ENCODE measurements at regions of chr15 and their contacts with region 1.

Region 1: DNA sequence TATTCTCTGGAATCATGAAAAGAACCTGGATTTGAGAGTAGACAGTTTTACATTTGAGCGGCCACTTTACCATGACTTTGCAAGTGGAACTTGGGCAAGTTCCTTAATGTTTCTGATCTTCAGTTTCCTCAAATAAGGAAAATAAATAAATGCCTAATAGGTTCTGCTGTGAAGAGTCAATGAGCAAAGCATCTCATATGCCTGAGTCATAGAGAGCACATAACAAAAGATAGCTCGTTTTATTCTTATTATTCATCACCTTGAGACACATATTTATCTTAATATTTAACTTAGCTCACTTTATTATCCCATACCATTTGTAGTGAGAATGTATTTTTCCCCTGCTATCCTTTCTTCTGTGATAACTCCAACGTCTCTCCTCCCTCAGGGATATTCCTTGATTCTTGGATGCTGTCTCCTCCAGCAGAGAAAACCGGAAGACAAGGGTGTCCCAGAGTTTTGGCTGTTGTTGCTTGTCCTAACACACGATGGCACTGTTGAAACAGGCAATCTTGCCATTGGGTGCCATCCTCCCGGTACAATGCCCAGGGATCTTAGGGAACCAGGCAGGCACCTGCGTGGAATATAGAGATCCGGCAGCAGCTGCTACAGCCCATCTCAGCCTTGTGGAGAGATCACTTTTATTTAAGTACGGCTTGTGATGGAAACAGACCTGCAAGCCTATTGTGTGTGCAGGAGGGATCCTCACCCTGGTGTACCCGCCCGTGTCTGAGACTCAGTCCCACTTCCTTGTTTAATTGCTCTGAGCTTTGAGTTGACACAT is 33.3 kb upstream of the VPS33B start:
- DNase-seq: no peak
- H3K4me3 ChIP-seq: no peak overlapping the region
- H3K27ac ChIP-seq: no peak overlapping the region
- H3K4me1 ChIP-seq: peaks cover 0 to 6% (median 0%) of the 10 kb centered on the region in 6 donors
- H3K27me3 ChIP-seq: peaks cover 0 to 82% (median 43%) of the 10 kb centered on the region in 7 donors
- CTCF ChIP-seq: peak in 10 of 11 experiments; percentile 19 to 74 (median 62)
- POLR2A ChIP-seq: no peak

Region 2: GRCh38 chr15:91224755-91225380 is 169.1 kb after region 1 on chr15:
- intact Hi-C with region 1: loop called (anchors 5 kb)
- DNase-seq: no peak
- H3K4me3 ChIP-seq: no peak overlapping the region
- H3K27ac ChIP-seq: no peak overlapping the region
- H3K4me1 ChIP-seq: no peaks in the 10 kb centered on the region
- H3K27me3 ChIP-seq: peaks cover 0 to 72% (median 5%) of the 10 kb centered on the region in 7 donors
- CTCF ChIP-seq: peak in 9 of 11 experiments; percentile 30 to 64 (median 57)
- POLR2A ChIP-seq: no peak

Region 3: DNA sequence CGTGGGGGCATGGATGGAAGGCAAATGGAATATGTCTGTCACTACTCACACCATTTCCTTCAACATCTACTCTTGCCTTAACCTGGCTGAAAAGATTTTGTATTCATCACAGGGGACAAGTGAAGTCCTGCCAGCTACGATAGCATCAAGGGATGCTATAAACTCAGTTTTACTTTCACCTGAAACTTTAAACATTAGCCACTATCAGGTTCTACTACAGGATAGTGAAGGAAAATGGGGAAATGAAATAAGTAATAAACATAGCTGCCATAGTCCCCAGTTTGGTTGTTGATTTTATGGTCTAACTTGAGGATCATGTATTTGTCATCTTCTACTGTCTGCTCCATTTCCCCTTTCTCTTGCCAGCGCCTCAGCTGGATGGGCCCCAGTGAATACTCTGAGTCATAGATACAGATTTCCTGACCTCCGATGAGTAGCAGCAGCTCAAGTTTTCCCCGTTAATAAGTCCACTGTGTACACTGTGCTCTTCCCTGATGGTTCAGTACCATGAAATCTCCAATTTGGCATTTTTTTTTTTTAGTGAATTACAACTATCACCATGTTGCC is 459.5 kb after region 1 on chr15:
- intact Hi-C with region 1: no loop called
- DNase-seq: no peak
- H3K4me3 ChIP-seq: no peak overlapping the region
- H3K27ac ChIP-seq: no peak overlapping the region
- H3K4me1 ChIP-seq: no peaks in the 10 kb centered on the region
- H3K27me3 ChIP-seq: peaks cover 0 to 10% (median 0%) of the 10 kb centered on the region in 7 donors
- CTCF ChIP-seq: no peak
- POLR2A ChIP-seq: no peak